ENCODE measurements at regions of chr2 and their contacts with region 1.

Region 1: DNA sequence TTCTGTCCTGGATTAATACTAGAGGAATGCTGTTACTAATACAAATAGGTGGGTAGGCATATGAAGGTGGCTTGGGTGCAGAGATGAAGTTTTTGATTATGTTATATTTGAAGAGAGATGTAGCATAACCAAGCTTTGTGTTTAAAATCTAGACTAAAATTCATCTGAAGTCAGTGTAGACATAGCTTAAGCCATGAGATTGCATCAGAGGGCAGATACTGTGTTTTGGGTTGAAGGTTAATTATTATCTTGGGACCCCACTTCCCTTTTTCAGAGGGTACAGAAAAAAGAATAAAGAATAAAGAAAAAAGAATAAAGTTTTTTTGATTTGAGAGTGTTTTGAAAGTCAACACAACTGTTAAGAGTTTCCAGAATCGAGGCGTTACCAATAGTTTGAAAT is 13.0 kb downstream of the PPM1B start:
- DNase-seq: no peak
- ATAC-seq: no peak
- H3K4me3 Mint-ChIP-seq: no peak overlapping the region
- H3K27ac Mint-ChIP-seq: peak overlapping the region; percentile 32
- H3K4me1 Mint-ChIP-seq: peaks cover 73% of the 10 kb centered on the region
- H3K27me3 Mint-ChIP-seq: no peaks in the 10 kb centered on the region
- CTCF ChIP-seq: no peak

Region 2: GRCh38 chr2:44167940-44168680 is 13.5 kb before region 1 on chr2:
- CTCF ChIA-PET with region 1: interaction called, 4 read pairs
- POLR2A ChIA-PET with region 1: interaction called, 21 read pairs
- intact Hi-C with region 1: no loop called
- DNase-seq: peak; percentile 100
- ATAC-seq: peak; percentile 80
- H3K4me3 Mint-ChIP-seq: peak overlapping the region; percentile 89
- H3K27ac Mint-ChIP-seq: peak overlapping the region; percentile 99
- H3K4me1 Mint-ChIP-seq: peaks cover 27% of the 10 kb centered on the region
- H3K27me3 Mint-ChIP-seq: no peaks in the 10 kb centered on the region
- CTCF ChIP-seq: no peak

Region 3: DNA sequence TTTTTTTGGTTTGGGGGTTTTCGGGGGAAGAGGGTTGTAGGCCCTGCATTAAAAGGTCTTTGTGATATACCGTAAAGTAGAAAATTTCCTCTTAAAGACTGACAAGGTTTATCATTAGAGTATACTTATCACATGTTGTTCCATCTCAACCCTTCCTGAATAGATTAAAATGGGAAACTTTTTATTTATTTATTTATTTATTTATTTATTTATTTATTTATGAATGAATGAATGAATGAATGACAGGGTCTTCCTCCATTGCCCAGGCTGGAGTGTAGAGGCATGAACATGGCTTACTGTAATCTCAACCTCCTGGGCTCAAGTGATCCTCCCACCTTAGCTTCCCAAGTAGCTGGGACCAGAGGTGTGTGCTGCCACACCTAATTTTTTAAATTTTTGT is 45.1 kb after region 1 on chr2:
- CTCF ChIA-PET with region 1: no interaction called
- POLR2A ChIA-PET with region 1: no interaction called
- intact Hi-C with region 1: no loop called
- DNase-seq: no peak
- ATAC-seq: no peak
- H3K4me3 Mint-ChIP-seq: no peak overlapping the region
- H3K27ac Mint-ChIP-seq: no peak overlapping the region
- H3K4me1 Mint-ChIP-seq: peaks cover 7% of the 10 kb centered on the region
- H3K27me3 Mint-ChIP-seq: no peaks in the 10 kb centered on the region
- CTCF ChIP-seq: no peak

Region 4: GRCh38 chr2:44462934-44463849 is 281.5 kb after region 1 on chr2:
- CTCF ChIA-PET with region 1: no interaction called
- POLR2A ChIA-PET with region 1: no interaction called
- intact Hi-C with region 1: no loop called
- DNase-seq: no peak
- ATAC-seq: no peak
- H3K4me3 Mint-ChIP-seq: no peak overlapping the region
- H3K27ac Mint-ChIP-seq: no peak overlapping the region
- H3K4me1 Mint-ChIP-seq: no peaks in the 10 kb centered on the region
- H3K27me3 Mint-ChIP-seq: no peaks in the 10 kb centered on the region
- CTCF ChIP-seq: no peak

Measured in activated CD8-positive, alpha-beta T cell treated with anti-CD3 and anti-CD28 coated beads for 36 hours (primary cell).